ENCODE measurements at regions of chr13 and their contacts with region 1.

Region 1: GRCh38 chr13:72808917-72809500 is 27.1 kb downstream of the PIBF1 start:
- DNase-seq: no peak
- H3K4me3 ChIP-seq: no peak overlapping the region
- H3K27ac ChIP-seq: no peak overlapping the region
- H3K27me3 ChIP-seq: no peaks in the 10 kb centered on the region
- CTCF ChIP-seq: peak; percentile 53

Region 2: DNA sequence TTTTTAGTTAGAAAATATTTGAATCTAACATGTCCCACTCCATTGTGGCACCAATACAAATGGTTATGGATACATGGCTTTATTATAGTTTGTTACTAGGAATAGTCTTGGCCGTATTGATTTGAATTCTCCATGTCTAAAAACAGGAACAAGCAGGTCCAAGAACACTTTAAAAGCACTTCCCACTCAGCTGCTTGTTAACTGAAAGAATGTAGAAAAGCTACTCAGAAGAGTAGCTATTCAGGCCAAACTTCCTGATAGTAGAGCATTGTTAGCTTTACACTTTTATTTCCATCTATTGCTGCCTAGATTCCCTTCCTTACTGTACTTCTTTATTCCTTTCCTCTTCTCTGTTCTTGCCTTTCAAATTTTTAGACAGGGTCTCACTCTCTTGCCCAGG is 20.2 kb before region 1 on chr13:
- CTCF ChIA-PET with region 1: interaction called, 11 read pairs
- POLR2A ChIA-PET with region 1: no interaction called
- DNase-seq: no peak
- H3K4me3 ChIP-seq: no peak overlapping the region
- H3K27ac ChIP-seq: no peak overlapping the region
- H3K27me3 ChIP-seq: no peaks in the 10 kb centered on the region
- CTCF ChIP-seq: no peak

Region 3: GRCh38 chr13:72820156-72820897 is 11.3 kb after region 1 on chr13:
- CTCF ChIA-PET with region 1: interaction called, 54 read pairs
- POLR2A ChIA-PET with region 1: no interaction called
- DNase-seq: peak; percentile 4
- H3K4me3 ChIP-seq: no peak overlapping the region
- H3K27ac ChIP-seq: no peak overlapping the region
- H3K27me3 ChIP-seq: no peaks in the 10 kb centered on the region
- CTCF ChIP-seq: no peak

Region 4: DNA sequence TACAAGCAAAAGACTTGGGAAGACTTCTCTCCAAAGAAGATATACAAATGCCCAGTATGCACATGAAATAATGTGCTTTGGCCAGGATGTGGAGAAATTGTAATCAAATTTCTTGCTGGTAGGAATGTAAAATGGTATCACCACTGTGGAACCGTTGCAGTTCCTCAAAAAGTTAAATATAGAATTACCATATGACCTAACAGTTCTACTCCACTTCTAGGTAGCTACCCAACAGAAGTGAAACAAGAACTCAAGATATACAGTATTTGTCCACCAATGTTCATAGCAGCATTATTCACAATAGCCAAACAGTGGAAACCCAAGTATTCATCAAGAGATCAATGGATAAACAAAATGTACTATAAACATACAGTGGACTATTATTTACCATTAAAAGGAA is 154.8 kb after region 1 on chr13:
- CTCF ChIA-PET with region 1: no interaction called
- POLR2A ChIA-PET with region 1: no interaction called
- DNase-seq: no peak
- H3K4me3 ChIP-seq: no peak overlapping the region
- H3K27ac ChIP-seq: no peak overlapping the region
- H3K27me3 ChIP-seq: no peaks in the 10 kb centered on the region
- CTCF ChIP-seq: no peak

Region 5: DNA sequence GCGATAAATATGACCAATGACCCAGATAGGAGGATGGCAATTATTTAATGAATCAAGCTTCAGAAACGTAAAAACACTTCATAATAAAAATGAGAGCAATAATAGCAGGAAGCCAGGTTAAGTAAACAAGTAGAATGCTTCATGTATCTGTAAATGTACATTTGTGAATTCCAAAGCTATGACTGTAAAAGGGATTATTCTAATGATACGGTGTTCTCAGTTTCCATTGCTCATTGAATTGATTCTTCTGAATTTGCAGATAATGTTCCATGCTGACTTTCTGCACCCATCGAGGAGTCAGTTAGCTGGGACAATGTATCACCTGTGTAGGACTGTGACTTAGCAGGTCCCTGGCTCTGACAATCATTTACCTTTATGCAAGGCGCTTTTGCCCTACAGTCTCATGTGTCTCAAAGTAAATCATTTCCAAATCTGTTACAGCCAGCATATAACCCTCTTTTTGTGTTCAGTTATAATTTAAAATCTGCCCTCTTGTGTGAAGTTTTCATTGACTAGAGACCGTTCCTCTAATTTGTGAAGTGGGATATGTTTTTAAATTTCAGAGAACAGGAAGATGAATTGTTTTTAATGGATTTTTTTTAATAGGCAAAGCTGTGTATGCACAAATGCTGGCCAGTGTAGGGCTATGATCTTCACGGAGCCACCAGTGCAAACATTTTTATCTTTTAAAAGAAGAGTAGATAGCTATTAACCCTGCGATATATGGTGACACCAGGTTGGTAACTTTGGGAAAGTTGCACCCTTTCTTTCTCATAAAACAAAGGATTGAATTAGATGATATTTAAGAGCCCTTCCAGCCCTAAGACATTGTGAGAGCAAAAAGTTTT is 516.9 kb after region 1 on chr13:
- CTCF ChIA-PET with region 1: interaction called, 11 read pairs
- POLR2A ChIA-PET with region 1: no interaction called
- DNase-seq: no peak
- H3K4me3 ChIP-seq: no peak overlapping the region
- H3K27ac ChIP-seq: no peak overlapping the region
- H3K27me3 ChIP-seq: no peaks in the 10 kb centered on the region
- CTCF ChIP-seq: no peak

Region 6: GRCh38 chr13:73708393-73708985 is 899.5 kb after region 1 on chr13:
- CTCF ChIA-PET with region 1: interaction called, 12 read pairs
- POLR2A ChIA-PET with region 1: no interaction called
- DNase-seq: peak; percentile 39
- H3K4me3 ChIP-seq: no peak overlapping the region
- H3K27ac ChIP-seq: no peak overlapping the region
- H3K27me3 ChIP-seq: no peaks in the 10 kb centered on the region
- CTCF ChIP-seq: peak; percentile 90

Measured in AG04450 (cell line).